ENCODE measurements at regions of chr15 and their contacts with region 1.

Region 1: GRCh38 chr15:50315814-50316630 is 39.0 kb downstream of the GABPB1 start:
- DNase-seq: no peak
- H3K4me3 ChIP-seq: no peak overlapping the region
- CTCF ChIP-seq: peak; percentile 27

Region 2: DNA sequence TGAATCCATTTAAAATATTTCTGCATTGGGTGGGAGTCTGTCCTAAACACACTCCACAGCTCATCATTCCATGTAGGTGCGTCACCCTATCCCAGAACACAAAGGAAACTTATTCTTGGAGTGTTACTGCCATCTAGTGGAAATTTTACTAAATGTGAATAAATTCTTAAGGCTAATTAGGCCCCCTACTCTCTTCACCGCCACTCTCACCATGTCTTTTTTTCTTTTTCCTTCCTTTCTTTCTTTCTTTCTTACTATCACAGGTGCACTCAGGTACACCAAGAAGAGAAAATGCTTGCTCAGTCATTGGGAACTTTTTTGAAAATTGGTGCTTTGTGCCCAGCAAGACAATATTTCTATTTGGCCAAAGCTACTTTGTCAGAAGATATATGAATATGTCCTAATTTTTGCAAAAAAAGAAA is 170.6 kb before region 1 on chr15:
- CTCF ChIA-PET with region 1: interaction called, 189 read pairs
- POLR2A ChIA-PET with region 1: no interaction called
- DNase-seq: peak; percentile 24
- H3K4me3 ChIP-seq: no peak overlapping the region
- CTCF ChIP-seq: no peak

Region 3: GRCh38 chr15:50265620-50266019 is 50.4 kb before region 1 on chr15 and contains the start of gene HDC:
- CTCF ChIA-PET with region 1: no interaction called
- POLR2A ChIA-PET with region 1: no interaction called
- DNase-seq: no peak
- H3K4me3 ChIP-seq: no peak within 1 kb of the TSS
- CTCF ChIP-seq: no peak

Region 4: GRCh38 chr15:50302581-50302980 is 13.4 kb before region 1 on chr15:
- CTCF ChIA-PET with region 1: interaction called, 29 read pairs
- POLR2A ChIA-PET with region 1: no interaction called
- DNase-seq: no peak
- H3K4me3 ChIP-seq: no peak overlapping the region
- CTCF ChIP-seq: no peak

Region 5: GRCh38 chr15:50330921-50331320 is 14.9 kb after region 1 on chr15:
- CTCF ChIA-PET with region 1: interaction called, 19 read pairs
- POLR2A ChIA-PET with region 1: no interaction called
- DNase-seq: no peak
- H3K4me3 ChIP-seq: no peak overlapping the region
- CTCF ChIP-seq: no peak

Region 6: GRCh38 chr15:50411870-50412269 is 95.8 kb after region 1 on chr15:
- CTCF ChIA-PET with region 1: no interaction called
- POLR2A ChIA-PET with region 1: no interaction called
- DNase-seq: no peak
- H3K4me3 ChIP-seq: no peak overlapping the region
- CTCF ChIP-seq: no peak

Measured in AG04449 (cell line).